CD4-positive, alpha-beta memory T cell (primary cell): ENCODE measurements at regions of chrX and their contacts with region 1.

Region 1: DNA sequence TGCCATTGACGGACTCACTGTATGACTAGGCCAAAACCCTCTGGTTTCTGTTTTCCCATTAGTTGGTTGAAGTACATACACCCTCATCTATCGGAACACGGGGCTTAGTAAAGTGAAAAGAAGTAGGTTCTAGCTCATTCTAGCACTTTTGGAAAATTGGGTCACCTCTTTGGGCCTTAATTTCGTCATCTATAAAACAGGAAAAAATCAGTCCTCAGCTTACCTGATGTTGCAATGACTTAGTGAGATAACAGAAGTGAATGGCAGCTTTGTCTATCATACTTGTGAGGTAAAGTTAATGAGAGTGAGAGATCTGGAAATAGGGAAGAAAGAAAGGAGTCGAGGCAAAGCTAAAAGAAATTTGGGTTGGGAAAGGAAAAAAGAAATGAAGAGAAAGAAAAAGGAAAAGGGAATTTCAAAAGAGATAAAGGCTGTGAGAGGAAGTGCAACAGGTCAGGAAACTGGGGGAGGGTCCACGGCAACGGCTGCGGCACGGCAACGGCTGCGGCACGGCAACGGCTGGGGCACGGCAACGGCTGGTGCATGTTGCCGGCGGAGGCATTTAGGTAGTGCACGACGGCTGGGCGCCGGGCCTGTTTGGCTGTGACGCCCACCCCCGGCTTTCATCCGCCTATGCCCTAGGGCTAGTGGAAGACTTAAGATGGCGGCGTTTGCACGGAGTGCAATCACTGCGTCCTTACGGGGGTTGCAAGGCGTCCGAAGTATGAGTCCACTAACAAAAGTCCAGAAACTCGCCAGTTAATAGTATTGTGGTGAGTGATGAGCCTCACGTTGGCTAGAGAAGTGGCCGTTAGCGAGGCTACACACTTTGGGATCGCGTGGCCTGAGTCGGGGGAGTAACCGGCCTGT is 360.1 kb upstream of the ZCCHC13 start:
- DNase-seq: peak; percentile 85 to 90 (median 88)
- H3K4me3 ChIP-seq: peak overlapping the region; percentile 73 to 94
- H3K4me3 Mint-ChIP-seq: peak overlapping the region; percentile 88 to 97 (median 91)
- H3K27ac ChIP-seq: peak overlapping the region; percentile 74
- H3K27ac Mint-ChIP-seq: peak overlapping the region; percentile 95 to 99 (median 98)
- H3K4me1 ChIP-seq: peaks cover 23% of the 10 kb centered on the region
- H3K4me1 Mint-ChIP-seq: peaks cover 12 to 35% (median 25%) of the 10 kb centered on the region in 4 donors
- H3K27me3 ChIP-seq: no peaks in the 10 kb centered on the region
- H3K27me3 Mint-ChIP-seq: no peaks in the 10 kb centered on the region

Region 2: DNA sequence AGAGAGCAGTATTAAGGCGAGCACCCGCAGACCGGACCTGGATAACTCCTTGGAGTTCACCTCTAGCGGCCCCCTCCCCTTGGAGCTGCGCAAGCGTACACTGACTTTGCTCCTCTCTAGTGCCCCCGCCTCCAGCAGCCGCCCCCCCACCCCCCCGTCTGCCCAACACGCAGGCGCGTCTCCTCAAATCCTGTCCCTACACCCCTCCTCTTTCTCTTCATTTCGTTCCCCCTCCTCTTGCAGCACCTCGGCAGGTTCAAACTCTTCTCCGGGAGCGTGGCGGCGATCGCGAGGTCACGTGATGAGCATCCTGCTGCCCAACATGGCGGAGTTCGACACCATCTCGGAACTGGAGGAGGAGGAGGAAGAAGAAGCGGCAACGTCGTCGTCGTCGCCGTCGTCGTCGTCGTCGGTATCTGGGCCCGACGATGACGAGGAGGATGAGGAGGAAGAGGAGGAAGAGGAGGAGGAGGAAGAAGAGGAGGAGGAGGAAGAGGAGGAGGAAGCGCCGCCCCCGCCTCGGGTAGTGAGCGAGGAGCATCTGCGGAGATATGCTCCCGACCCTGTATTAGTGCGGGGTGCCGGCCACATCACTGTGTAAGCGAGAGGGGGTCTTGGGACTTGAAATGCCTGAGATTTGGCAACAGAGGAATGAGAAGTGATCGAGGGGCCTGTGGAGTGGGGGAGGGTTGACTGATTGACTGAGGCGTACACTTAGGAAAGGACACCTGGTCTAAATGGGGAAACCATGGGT is 380.8 kb before region 1 on chrX and contains the start of gene CHIC1:
- CTCF ChIA-PET with region 1: no interaction called
- POLR2A ChIA-PET with region 1: no interaction called
- intact Hi-C with region 1: loop called (anchors 10 kb)
- DNase-seq: peak; percentile 74 to 85 (median 77)
- H3K4me3 ChIP-seq: peak within 1 kb of the TSS; percentile 73 to 81
- H3K4me3 Mint-ChIP-seq: peak within 1 kb of the TSS; percentile 88 to 98 (median 94)
- H3K27ac ChIP-seq: peak within 1 kb of the TSS; percentile 78
- H3K27ac Mint-ChIP-seq: peak within 1 kb of the TSS; percentile 94 to 99 (median 99)
- H3K4me1 ChIP-seq: peaks cover 32% of the 10 kb centered on the region
- H3K4me1 Mint-ChIP-seq: peaks cover 4 to 48% (median 11%) of the 10 kb centered on the region in 4 donors
- H3K27me3 ChIP-seq: no peaks in the 10 kb centered on the region
- H3K27me3 Mint-ChIP-seq: no peaks in the 10 kb centered on the region
- total RNA-seq, gene CHIC1: 17.2 to 18.1 TPM

Region 3: GRCh38 chrX:73977534-73978169 is 33.7 kb after region 1 on chrX:
- CTCF ChIA-PET with region 1: no interaction called
- POLR2A ChIA-PET with region 1: interaction called, 5 read pairs
- intact Hi-C with region 1: loop called (anchors 5 kb)
- DNase-seq: peak; percentile 70 to 84 (median 77)
- H3K4me3 ChIP-seq: no peak overlapping the region
- H3K4me3 Mint-ChIP-seq: peak overlapping the region; percentile 39 to 65 (median 56)
- H3K27ac ChIP-seq: peak overlapping the region; percentile 50
- H3K27ac Mint-ChIP-seq: peak overlapping the region; percentile 79 to 97 (median 92)
- H3K4me1 ChIP-seq: peaks cover 43% of the 10 kb centered on the region
- H3K4me1 Mint-ChIP-seq: peaks cover 21 to 83% (median 51%) of the 10 kb centered on the region in 4 donors
- H3K27me3 ChIP-seq: no peaks in the 10 kb centered on the region
- H3K27me3 Mint-ChIP-seq: no peaks in the 10 kb centered on the region